Activated CD4-positive, alpha-beta T cell treated with anti-CD3 and anti-CD28 coated beads, Interleukin-2, amount 10 ng/mL, durations not matched to agents 24 days and 14 days (primary cell): ENCODE measurements at regions of chr4 and their contacts with region 1.

Region 1: DNA sequence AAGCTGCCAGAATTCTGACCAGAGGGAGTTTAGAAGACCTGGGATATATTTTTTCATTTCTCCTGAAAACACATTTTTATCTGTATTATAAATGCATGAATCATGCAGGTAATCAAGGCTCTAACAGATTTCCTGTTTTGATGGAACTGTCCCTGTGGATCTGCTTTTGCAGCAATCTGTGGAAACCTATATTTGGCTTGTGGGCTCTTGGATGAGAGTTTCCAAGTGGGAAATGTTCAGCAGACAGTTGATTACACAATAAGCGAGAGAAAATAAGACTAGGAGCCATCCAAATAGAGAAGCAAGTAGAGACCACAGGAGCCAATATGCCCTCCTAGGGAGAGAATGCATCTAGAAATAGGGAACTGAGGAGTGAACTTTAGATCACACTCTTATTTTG is 105.0 kb downstream of the NDST3 start:
- DNase-seq: no peak
- H3K4me3 Mint-ChIP-seq: no peak overlapping the region
- H3K27ac Mint-ChIP-seq: no peak overlapping the region
- H3K4me1 Mint-ChIP-seq: no peaks in the 10 kb centered on the region
- H3K27me3 Mint-ChIP-seq: peaks cover 3% of the 10 kb centered on the region

Region 2: DNA sequence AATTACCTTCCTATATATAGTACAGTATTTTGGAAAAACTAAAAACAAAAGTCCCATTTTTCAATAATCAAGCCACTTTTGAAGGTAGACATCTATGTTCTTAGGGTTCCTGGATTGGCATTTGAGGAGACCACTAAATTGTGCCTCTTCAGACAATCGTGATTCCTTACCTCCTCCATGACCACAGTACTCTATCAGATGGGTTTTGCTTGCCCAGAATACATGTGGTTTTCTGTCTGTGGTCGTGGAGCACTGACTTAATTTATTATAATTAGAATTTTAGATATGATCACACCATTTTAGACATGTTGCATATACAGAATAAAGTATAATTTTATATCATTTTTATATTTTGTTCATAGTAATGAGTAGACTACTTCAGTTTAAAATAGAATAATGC is 37.0 kb before region 1 on chr4:
- intact Hi-C with region 1: loop called (anchors 1 kb)
- DNase-seq: no peak
- H3K4me3 Mint-ChIP-seq: no peak overlapping the region
- H3K27ac Mint-ChIP-seq: no peak overlapping the region
- H3K4me1 Mint-ChIP-seq: no peaks in the 10 kb centered on the region
- H3K27me3 Mint-ChIP-seq: no peaks in the 10 kb centered on the region

Region 3: GRCh38 chr4:118114720-118115119 is 24.5 kb before region 1 on chr4:
- intact Hi-C with region 1: no loop called
- DNase-seq: no peak
- H3K4me3 Mint-ChIP-seq: no peak overlapping the region
- H3K27ac Mint-ChIP-seq: no peak overlapping the region
- H3K4me1 Mint-ChIP-seq: peaks cover 5% of the 10 kb centered on the region
- H3K27me3 Mint-ChIP-seq: peaks cover 1% of the 10 kb centered on the region